ENCODE measurements at regions of chr4 and their contacts with region 1.

Region 1: GRCh38 chr4:122732329-122733026 is at the start of gene BBS12:
- DNase-seq: peak; percentile 99
- H3K4me3 Mint-ChIP-seq: peak within 1 kb of the TSS; percentile 94
- H3K27ac Mint-ChIP-seq: peak within 1 kb of the TSS; percentile 92
- H3K4me1 Mint-ChIP-seq: peaks cover 26% of the 10 kb centered on the region
- H3K27me3 Mint-ChIP-seq: no peaks in the 10 kb centered on the region
- total RNA-seq, gene BBS12: 1.7 to 2.1 TPM

Region 2: DNA sequence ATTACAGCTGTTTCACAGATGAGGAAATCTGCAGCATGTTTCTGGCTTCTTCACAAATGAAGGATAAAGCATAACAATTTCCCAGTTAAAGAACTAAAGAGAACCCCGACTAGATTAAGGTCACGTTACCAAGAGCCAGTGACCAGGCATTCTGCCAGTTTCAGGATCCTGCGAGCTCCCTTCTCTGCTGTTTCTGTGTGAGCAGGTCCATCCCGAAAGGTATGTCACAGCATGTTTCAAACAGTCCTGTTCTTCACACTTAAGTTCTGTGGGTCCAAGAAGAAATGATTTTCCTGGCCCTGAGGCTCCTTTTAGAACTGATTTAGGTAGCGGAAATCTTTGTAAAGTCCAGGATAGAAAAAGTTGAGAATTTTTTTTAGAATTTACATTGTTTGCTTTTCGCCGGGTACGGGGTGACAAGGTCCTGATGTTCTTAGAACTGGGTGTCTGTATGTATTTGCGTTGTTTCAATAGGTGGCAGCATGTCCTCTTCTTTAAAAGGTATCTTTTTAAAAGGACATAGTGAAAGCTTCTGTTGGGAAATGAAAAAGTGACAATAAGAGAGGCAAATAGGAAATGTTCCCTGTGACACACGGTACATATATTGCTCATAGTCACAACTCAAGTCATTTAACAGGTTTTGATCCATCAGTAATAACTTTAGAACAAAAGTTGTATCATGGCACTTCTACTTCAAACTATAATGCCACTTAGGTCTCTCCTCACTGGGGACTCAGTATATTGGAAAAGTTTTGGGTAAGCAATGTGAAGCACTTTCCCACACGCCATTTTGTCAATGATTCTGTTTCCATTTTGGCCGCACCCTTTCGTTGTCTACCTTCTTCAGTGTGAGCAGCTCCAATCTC is 130.0 kb before region 1 on chr4:
- CTCF ChIA-PET with region 1: interaction called, 10 read pairs
- POLR2A ChIA-PET with region 1: no interaction called
- DNase-seq: peak; percentile 37
- H3K4me3 Mint-ChIP-seq: no peak overlapping the region
- H3K27ac Mint-ChIP-seq: no peak overlapping the region
- H3K4me1 Mint-ChIP-seq: peaks cover 17% of the 10 kb centered on the region
- H3K27me3 Mint-ChIP-seq: peaks cover 6% of the 10 kb centered on the region

Region 3: GRCh38 chr4:122716825-122717448 is 15.5 kb before region 1 on chr4:
- CTCF ChIA-PET with region 1: interaction called, 14 read pairs
- POLR2A ChIA-PET with region 1: no interaction called
- DNase-seq: peak; percentile 83
- H3K4me3 Mint-ChIP-seq: no peak overlapping the region
- H3K27ac Mint-ChIP-seq: no peak overlapping the region
- H3K4me1 Mint-ChIP-seq: peaks cover 37% of the 10 kb centered on the region
- H3K27me3 Mint-ChIP-seq: no peaks in the 10 kb centered on the region

Region 4: GRCh38 chr4:122747883-122748282 is 15.4 kb after region 1 on chr4:
- CTCF ChIA-PET with region 1: interaction called, 14 read pairs
- POLR2A ChIA-PET with region 1: no interaction called
- DNase-seq: no peak
- H3K4me3 Mint-ChIP-seq: no peak overlapping the region
- H3K27ac Mint-ChIP-seq: no peak overlapping the region
- H3K4me1 Mint-ChIP-seq: peaks cover 15% of the 10 kb centered on the region
- H3K27me3 Mint-ChIP-seq: peaks cover 20% of the 10 kb centered on the region

Region 5: DNA sequence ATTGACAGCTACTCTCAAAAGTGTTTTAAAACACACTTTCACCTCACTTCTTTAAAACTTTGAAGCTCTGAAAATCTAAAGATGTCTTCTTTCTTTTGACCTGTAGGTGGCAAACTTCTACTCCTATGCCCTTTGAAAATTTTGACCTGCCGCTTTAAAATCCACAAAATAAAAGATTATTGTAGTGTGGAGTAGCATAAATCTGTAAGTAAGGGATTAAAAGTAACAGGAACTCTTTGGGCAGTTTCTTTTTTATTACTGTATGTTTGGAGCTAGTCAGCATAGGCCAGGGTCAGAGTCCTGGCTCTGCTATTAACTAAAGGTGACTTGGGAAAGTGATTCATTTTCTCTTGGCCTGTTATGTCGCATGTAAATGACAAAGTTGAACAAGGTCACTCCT is 25.6 kb after region 1 on chr4:
- CTCF ChIA-PET with region 1: interaction called, 10 read pairs
- POLR2A ChIA-PET with region 1: no interaction called
- DNase-seq: no peak
- H3K4me3 Mint-ChIP-seq: no peak overlapping the region
- H3K27ac Mint-ChIP-seq: no peak overlapping the region
- H3K4me1 Mint-ChIP-seq: peaks cover 22% of the 10 kb centered on the region
- H3K27me3 Mint-ChIP-seq: peaks cover 25% of the 10 kb centered on the region